Aorta (tissue), 5 donors: ENCODE measurements at regions of chr15 and their contacts with region 1.

Region 1: GRCh38 chr15:45919806-45920205 is 285.0 kb downstream of the SQOR start:
- DNase-seq: no peak
- ATAC-seq: no peak
- H3K4me3 ChIP-seq: no peak overlapping the region
- H3K27ac ChIP-seq: no peak overlapping the region
- H3K4me1 ChIP-seq: no peaks in the 10 kb centered on the region
- H3K27me3 ChIP-seq: no peaks in the 10 kb centered on the region

Region 2: GRCh38 chr15:45842151-45842550 is 77.7 kb before region 1 on chr15:
- intact Hi-C with region 1: loop called in 1 of 2 experiments (anchors 10 kb)
- DNase-seq: no peak
- ATAC-seq: no peak
- H3K4me3 ChIP-seq: no peak overlapping the region
- H3K27ac ChIP-seq: no peak overlapping the region
- H3K4me1 ChIP-seq: no peaks in the 10 kb centered on the region
- H3K27me3 ChIP-seq: no peaks in the 10 kb centered on the region

Region 3: GRCh38 chr15:45948181-45948621 is 28.4 kb after region 1 on chr15:
- intact Hi-C with region 1: no loop called
- DNase-seq: no peak
- ATAC-seq: no peak
- H3K4me3 ChIP-seq: no peak overlapping the region
- H3K27ac ChIP-seq: no peak overlapping the region
- H3K4me1 ChIP-seq: no peaks in the 10 kb centered on the region
- H3K27me3 ChIP-seq: no peaks in the 10 kb centered on the region